ENCODE measurements at regions of chr3 and their contacts with region 1.

Region 1: GRCh38 chr3:56494686-56495322 is 26.5 kb upstream of the ERC2 start:
- DNase-seq: peak; percentile 86
- H3K4me3 Mint-ChIP-seq: no peak overlapping the region
- H3K27ac Mint-ChIP-seq: no peak overlapping the region
- H3K4me1 Mint-ChIP-seq: no peaks in the 10 kb centered on the region
- H3K27me3 Mint-ChIP-seq: peaks cover 11% of the 10 kb centered on the region

Region 2: DNA sequence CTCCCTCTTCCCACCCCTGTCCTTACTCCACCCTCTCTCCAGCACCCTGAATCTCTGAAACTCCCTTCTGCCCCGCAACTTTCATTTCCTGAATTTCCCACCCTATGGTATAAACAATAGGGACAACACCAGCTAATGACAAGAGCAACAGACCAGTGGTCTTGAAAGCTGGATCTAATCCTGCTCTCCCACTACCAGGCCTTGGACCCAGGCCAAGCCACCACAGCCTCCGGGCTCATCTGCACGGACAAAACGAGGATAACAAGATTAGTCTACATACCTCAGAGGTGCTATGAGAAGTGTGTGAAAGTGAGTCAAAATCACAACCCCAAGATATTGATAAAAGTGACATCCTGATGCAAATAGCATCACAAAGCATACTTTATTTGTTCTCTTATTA is 155.1 kb before region 1 on chr3:
- CTCF ChIA-PET with region 1: interaction called, 8 read pairs
- intact Hi-C with region 1: loop called (anchors 2 kb)
- DNase-seq: no peak
- H3K4me3 Mint-ChIP-seq: no peak overlapping the region
- H3K27ac Mint-ChIP-seq: no peak overlapping the region
- H3K4me1 Mint-ChIP-seq: no peaks in the 10 kb centered on the region
- H3K27me3 Mint-ChIP-seq: peaks cover 11% of the 10 kb centered on the region

Region 3: GRCh38 chr3:56484122-56484521 is 10.7 kb before region 1 on chr3:
- CTCF ChIA-PET with region 1: interaction called, 16 read pairs
- intact Hi-C with region 1: no loop called
- DNase-seq: no peak
- H3K4me3 Mint-ChIP-seq: no peak overlapping the region
- H3K27ac Mint-ChIP-seq: no peak overlapping the region
- H3K4me1 Mint-ChIP-seq: no peaks in the 10 kb centered on the region
- H3K27me3 Mint-ChIP-seq: peaks cover 15% of the 10 kb centered on the region

Region 4: GRCh38 chr3:57451150-57451846 is 956.5 kb after region 1 on chr3:
- CTCF ChIA-PET with region 1: no interaction called
- intact Hi-C with region 1: no loop called
- DNase-seq: no peak
- H3K4me3 Mint-ChIP-seq: no peak overlapping the region
- H3K27ac Mint-ChIP-seq: no peak overlapping the region
- H3K4me1 Mint-ChIP-seq: no peaks in the 10 kb centered on the region
- H3K27me3 Mint-ChIP-seq: no peaks in the 10 kb centered on the region